Astrocyte of the cerebellum (primary cell): ENCODE measurements at regions of chr3 and their contacts with region 1.

Region 1: DNA sequence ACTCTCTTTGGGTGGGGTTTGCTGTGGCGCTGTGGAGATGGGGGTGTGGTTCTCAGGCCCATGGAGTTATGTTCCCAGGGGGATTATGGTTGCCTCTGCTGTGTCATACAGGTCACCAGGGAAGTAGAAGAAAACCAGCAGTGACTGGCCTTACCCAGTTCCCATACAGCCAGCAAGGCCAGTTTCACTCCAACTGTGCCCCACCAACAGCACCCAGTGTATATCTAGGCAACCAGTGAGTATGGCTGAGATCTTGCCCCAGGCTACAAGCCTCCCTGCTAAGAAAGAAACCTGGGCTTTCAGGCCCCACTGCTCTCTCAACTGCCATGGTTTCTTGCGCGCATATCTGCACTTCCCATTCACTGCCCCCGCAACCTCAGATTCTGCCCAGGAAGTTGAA is 31.4 kb upstream of the RARB start:
- DNase-seq: no peak
- H3K4me3 ChIP-seq: no peak overlapping the region
- CTCF ChIP-seq: no peak

Region 2: GRCh38 chr3:25338152-25338725 is 58.4 kb before region 1 on chr3:
- in situ Hi-C with region 1: loop called (anchors 5 kb)
- DNase-seq: no peak
- H3K4me3 ChIP-seq: no peak overlapping the region
- CTCF ChIP-seq: no peak

Region 3: GRCh38 chr3:25362118-25362517 is 34.6 kb before region 1 on chr3:
- in situ Hi-C with region 1: no loop called
- DNase-seq: no peak
- H3K4me3 ChIP-seq: no peak overlapping the region
- CTCF ChIP-seq: no peak